ENCODE measurements at regions of chr18 and their contacts with region 1.

Region 1: DNA sequence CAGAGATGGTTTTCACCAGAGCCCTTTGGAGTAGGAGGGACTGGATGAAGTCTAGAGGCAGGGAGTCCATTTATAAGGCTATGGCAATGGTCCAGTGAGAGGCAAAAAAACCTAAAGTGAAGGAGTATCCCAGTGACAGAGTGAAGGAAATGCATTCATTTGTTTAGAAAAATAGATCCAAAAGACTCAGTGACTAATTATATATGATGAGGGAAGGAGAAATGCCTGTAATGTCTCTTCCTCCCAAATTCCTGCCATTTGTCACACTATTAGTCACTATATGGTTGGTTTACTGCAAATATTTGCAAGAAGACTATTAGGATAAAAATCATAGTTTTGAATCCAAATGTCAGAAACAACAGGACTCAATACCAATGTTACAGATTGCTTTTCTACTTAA is 104.2 kb downstream of the ZNF521 start:
- DNase-seq: peak; percentile 87
- ATAC-seq: peak; percentile 64
- H3K4me3 ChIP-seq: peak overlapping the region; percentile 44; the same call in 1 of the 2 replicates
- H3K27ac ChIP-seq: peak overlapping the region; percentile 91
- H3K4me1 ChIP-seq: peaks cover 37% of the 10 kb centered on the region
- H3K27me3 ChIP-seq: no peaks in the 10 kb centered on the region
- CTCF ChIP-seq: no peak

Region 2: DNA sequence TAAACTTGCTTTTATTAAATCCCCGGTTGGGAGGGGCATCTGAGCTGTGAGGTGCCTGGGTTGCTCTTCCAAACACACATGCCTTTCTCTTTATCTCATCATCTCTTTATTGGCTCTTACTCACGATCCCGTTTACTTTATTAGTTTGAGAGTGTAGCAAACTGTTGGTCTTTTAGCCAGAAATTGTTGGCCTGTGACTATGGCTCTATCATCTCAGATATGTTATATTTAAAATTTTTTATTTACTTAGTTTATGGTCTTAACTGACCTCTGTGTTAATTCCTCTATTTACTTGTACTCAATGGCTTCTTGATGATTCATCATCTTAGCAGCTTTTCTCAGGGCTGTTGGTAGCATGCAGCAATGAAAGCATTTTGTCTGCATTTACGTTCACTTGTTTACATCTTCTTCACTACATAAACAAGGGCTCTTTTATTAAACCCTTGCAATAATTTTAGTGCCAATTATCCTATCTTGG is 378.9 kb before region 1 on chr18:
- CTCF ChIA-PET with region 1: no interaction called
- POLR2A ChIA-PET with region 1: no interaction called
- intact Hi-C with region 1: loop called (anchors 5 kb)
- DNase-seq: peak; percentile 90
- ATAC-seq: peak; percentile 93
- H3K4me3 ChIP-seq: peak overlapping the region; percentile 26; the same call in 1 of the 2 replicates
- H3K27ac ChIP-seq: peak overlapping the region; percentile 77
- H3K4me1 ChIP-seq: peaks cover 20% of the 10 kb centered on the region
- H3K27me3 ChIP-seq: no peaks in the 10 kb centered on the region
- CTCF ChIP-seq: no peak

Region 3: GRCh38 chr18:25019086-25019860 is 228.5 kb before region 1 on chr18:
- CTCF ChIA-PET with region 1: no interaction called
- POLR2A ChIA-PET with region 1: no interaction called
- intact Hi-C with region 1: no loop called
- DNase-seq: no peak
- ATAC-seq: no peak
- H3K4me3 ChIP-seq: no peak overlapping the region
- H3K27ac ChIP-seq: no peak overlapping the region
- H3K4me1 ChIP-seq: no peaks in the 10 kb centered on the region
- H3K27me3 ChIP-seq: peaks cover 34% of the 10 kb centered on the region
- CTCF ChIP-seq: no peak

Region 4: GRCh38 chr18:25190472-25190871 is 57.3 kb before region 1 on chr18:
- CTCF ChIA-PET with region 1: no interaction called
- POLR2A ChIA-PET with region 1: no interaction called
- intact Hi-C with region 1: loop called (anchors 5 kb)
- DNase-seq: no peak
- ATAC-seq: no peak
- H3K4me3 ChIP-seq: no peak overlapping the region
- H3K27ac ChIP-seq: no peak overlapping the region
- H3K4me1 ChIP-seq: no peaks in the 10 kb centered on the region
- H3K27me3 ChIP-seq: peaks cover 83% of the 10 kb centered on the region
- CTCF ChIP-seq: no peak

Region 5: DNA sequence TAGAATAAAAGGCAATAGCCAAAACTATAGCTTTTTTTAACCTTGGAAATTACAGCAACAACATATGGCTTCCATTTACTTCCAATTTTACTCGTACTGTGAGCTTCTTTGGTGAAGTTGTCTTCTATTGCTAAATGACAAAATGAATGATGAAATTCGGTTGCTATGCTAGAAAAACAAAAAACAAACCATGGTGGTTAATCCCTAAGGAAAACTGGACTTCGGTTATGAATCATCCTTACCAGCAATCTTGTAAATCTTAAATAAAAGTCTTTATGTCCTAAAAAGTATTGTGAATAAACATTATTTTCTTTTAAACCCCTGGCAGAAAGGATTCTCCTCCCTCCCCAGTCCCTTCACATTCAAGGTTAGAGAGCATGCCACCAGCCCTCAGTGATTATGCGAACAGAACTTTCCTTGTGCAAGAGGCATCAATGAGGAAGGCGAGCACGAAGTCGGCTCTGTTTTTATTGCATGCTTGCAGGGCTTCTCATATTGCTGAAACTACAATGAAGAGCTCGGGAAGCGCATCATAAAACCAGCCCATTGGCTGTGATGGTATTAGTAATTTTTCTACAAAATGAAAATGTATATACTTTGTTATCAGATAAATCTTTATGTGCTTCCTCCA is 41.4 kb after region 1 on chr18:
- CTCF ChIA-PET with region 1: interaction called, 3 read pairs
- POLR2A ChIA-PET with region 1: interaction called, 3 read pairs
- intact Hi-C with region 1: loop called (anchors 1 kb)
- DNase-seq: peak; percentile 84
- ATAC-seq: peak; percentile 88
- H3K4me3 ChIP-seq: peak overlapping the region; percentile 49
- H3K27ac ChIP-seq: peak overlapping the region; percentile 95
- H3K4me1 ChIP-seq: peaks cover 18% of the 10 kb centered on the region
- H3K27me3 ChIP-seq: no peaks in the 10 kb centered on the region
- CTCF ChIP-seq: no peak

Region 6: DNA sequence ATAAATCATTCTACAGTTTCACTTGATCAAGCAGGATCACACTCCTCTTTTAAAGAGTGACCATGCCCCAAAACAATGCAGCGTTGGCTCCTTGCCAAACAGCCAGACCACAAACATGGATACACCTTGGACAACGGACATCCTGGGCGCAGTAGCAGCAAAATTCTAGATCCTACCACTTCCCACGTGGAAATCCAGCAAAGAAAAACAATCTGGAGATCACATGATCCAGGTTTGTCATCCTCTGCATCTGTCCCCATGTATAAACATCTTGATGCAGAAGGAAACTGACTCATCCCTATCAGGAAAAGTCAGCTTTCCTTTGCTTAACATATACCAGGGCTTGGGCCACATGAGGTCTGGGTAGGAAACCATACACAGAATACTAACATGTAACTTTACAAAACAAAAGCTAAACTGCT is 51.1 kb after region 1 on chr18:
- CTCF ChIA-PET with region 1: no interaction called
- POLR2A ChIA-PET with region 1: no interaction called
- intact Hi-C with region 1: loop called (anchors 2 kb)
- DNase-seq: peak; percentile 89
- ATAC-seq: peak; percentile 96
- H3K4me3 ChIP-seq: no peak overlapping the region
- H3K27ac ChIP-seq: peak overlapping the region; percentile 31
- H3K4me1 ChIP-seq: peaks cover 18% of the 10 kb centered on the region
- H3K27me3 ChIP-seq: no peaks in the 10 kb centered on the region
- CTCF ChIP-seq: no peak

Measured in PC-3 (cell line).